Activated naive CD4-positive, alpha-beta T cell treated with anti-CD3 and anti-CD28 coated beads for 36 hours (primary cell): ENCODE measurements at regions of chr1 and their contacts with region 1.

Region 1: DNA sequence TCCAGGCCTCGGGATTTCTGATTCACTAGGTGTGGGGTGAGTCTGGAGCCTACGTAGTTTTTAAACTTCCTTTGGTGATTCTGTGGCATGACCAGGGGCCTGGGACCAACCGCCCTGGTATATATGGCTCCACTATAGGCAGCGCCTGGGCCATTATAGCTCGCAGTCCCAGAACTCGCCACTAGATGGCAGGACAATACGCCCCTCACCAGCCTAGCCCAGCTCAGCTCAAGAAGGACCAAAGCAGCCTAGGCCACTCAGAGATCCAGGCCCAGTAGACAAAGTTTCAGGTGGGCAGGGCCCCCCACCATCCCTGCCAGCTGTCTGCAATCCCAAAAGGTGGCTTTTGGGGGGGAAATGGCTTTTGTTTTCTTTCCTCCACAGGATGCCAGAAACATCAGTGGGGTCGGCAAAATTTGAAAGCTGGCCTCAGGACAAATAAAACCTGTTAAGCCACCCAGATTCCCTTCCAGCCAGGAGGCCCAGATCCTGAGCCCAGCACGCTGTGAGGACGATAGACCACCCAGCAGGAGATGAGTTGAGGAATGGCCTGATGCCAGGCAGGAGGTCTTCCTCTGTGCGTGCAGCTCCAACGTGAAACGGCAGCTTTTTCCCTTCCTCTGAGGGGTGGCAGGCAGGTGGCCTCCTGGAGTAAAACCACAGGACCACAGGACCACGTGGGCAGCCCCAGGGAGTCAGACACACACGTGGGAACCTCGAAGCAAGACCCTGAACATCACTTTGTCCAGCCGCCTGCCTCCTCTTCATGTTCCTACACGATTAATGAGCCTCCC is 24.8 kb upstream of the TMEM51 start:
- DNase-seq: peak; percentile 84
- H3K4me3 Mint-ChIP-seq: no peak overlapping the region
- H3K27ac Mint-ChIP-seq: no peak overlapping the region
- H3K4me1 Mint-ChIP-seq: no peaks in the 10 kb centered on the region
- H3K27me3 Mint-ChIP-seq: peaks cover 10% of the 10 kb centered on the region

Region 2: GRCh38 chr1:15139654-15140350 is 11.1 kb after region 1 on chr1:
- CTCF ChIA-PET with region 1: interaction called, 11 read pairs
- intact Hi-C with region 1: no loop called
- DNase-seq: no peak
- H3K4me3 Mint-ChIP-seq: no peak overlapping the region
- H3K27ac Mint-ChIP-seq: no peak overlapping the region
- H3K4me1 Mint-ChIP-seq: peaks cover 2% of the 10 kb centered on the region
- H3K27me3 Mint-ChIP-seq: peaks cover 61% of the 10 kb centered on the region

Region 3: GRCh38 chr1:15152318-15153183 is 23.8 kb after region 1 on chr1:
- CTCF ChIA-PET with region 1: interaction called, 8 read pairs
- intact Hi-C with region 1: loop called (anchors 2 kb)
- DNase-seq: peak; percentile 74
- H3K4me3 Mint-ChIP-seq: peak overlapping the region; percentile 51
- H3K27ac Mint-ChIP-seq: no peak overlapping the region
- H3K4me1 Mint-ChIP-seq: peaks cover 30% of the 10 kb centered on the region
- H3K27me3 Mint-ChIP-seq: peaks cover 46% of the 10 kb centered on the region

Region 4: DNA sequence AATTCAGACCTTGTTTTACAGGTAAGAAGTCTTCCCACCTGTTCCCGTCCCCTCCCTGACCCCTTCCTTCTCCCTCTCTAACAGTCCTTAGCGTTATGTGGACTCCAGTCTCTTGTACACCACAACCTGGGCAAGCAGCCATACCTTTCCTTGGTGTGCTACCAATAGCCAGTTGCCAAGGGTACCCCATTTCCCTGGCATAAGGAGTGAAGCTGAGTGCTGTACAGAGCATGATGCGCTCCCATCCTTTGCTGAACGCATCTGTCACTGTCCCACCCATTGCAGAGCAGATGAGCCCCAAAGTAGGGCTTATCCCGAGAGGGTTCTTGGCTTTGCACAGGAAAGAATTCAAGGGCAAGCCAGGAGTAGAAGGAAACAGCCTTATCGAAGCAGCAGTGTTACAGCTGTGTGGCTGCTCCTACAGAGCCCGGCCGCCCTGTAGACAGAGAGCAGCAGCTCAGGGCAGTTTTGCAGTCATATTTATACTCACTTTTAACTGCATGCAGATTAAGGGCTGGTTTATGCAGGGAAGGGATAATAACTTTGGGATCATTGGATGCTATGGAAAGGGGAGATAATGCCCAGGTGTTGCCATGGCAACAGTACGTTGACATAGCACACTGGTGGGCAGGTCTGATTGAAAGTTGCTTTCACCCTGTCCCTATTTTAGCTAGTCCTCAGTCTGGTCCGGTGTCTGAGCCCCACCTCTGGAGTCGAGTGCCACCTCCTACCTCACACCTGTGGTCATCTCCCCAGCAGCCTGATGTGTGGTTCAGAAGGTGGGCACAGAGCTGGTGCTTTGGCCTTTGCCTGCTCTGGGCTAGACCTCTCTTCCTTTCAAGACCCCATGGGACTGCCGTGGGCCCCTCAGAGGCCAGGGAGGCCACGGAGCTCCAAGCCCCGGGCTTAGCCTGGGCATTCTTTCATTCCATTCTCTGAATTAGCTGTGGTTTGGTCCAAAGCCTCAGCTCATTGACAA is 123.4 kb after region 1 on chr1:
- CTCF ChIA-PET with region 1: interaction called, 10 read pairs
- intact Hi-C with region 1: no loop called
- DNase-seq: no peak
- H3K4me3 Mint-ChIP-seq: no peak overlapping the region
- H3K27ac Mint-ChIP-seq: peak overlapping the region; percentile 74
- H3K4me1 Mint-ChIP-seq: peaks cover 54% of the 10 kb centered on the region
- H3K27me3 Mint-ChIP-seq: peaks cover 21% of the 10 kb centered on the region

Region 5: GRCh38 chr1:15272009-15272788 is 143.5 kb after region 1 on chr1:
- CTCF ChIA-PET with region 1: interaction called, 58 read pairs
- intact Hi-C with region 1: loop called (anchors 1 kb)
- DNase-seq: peak; percentile 71
- H3K4me3 Mint-ChIP-seq: no peak overlapping the region
- H3K27ac Mint-ChIP-seq: no peak overlapping the region
- H3K4me1 Mint-ChIP-seq: peaks cover 4% of the 10 kb centered on the region
- H3K27me3 Mint-ChIP-seq: peaks cover 30% of the 10 kb centered on the region

Region 6: GRCh38 chr1:15304701-15305467 is 176.2 kb after region 1 on chr1:
- CTCF ChIA-PET with region 1: interaction called, 44 read pairs
- intact Hi-C with region 1: loop called (anchors 1 kb)
- DNase-seq: peak; percentile 84
- H3K4me3 Mint-ChIP-seq: no peak overlapping the region
- H3K27ac Mint-ChIP-seq: no peak overlapping the region
- H3K4me1 Mint-ChIP-seq: no peaks in the 10 kb centered on the region
- H3K27me3 Mint-ChIP-seq: peaks cover 2% of the 10 kb centered on the region